SK-N-SH (cell line): ENCODE measurements at regions of chr1 and their contacts with region 1.

Region 1: GRCh38 chr1:1250786-1251284 is 4.3 kb upstream of the C1QTNF12 start:
- DNase-seq: no peak
- H3K4me3 ChIP-seq: no peak overlapping the region
- H3K27ac ChIP-seq: peak overlapping the region in 1 of 2 experiments; percentile 6; a peak in 1 of 4 replicates
- H3K4me1 ChIP-seq: no peaks in the 10 kb centered on the region; a peak in 1 of 4 replicates
- H3K27me3 ChIP-seq: no peaks in the 10 kb centered on the region
- CTCF ChIP-seq: no peak
- EP300 ChIP-seq: no peak
- RAD21 ChIP-seq: no peak

Region 2: DNA sequence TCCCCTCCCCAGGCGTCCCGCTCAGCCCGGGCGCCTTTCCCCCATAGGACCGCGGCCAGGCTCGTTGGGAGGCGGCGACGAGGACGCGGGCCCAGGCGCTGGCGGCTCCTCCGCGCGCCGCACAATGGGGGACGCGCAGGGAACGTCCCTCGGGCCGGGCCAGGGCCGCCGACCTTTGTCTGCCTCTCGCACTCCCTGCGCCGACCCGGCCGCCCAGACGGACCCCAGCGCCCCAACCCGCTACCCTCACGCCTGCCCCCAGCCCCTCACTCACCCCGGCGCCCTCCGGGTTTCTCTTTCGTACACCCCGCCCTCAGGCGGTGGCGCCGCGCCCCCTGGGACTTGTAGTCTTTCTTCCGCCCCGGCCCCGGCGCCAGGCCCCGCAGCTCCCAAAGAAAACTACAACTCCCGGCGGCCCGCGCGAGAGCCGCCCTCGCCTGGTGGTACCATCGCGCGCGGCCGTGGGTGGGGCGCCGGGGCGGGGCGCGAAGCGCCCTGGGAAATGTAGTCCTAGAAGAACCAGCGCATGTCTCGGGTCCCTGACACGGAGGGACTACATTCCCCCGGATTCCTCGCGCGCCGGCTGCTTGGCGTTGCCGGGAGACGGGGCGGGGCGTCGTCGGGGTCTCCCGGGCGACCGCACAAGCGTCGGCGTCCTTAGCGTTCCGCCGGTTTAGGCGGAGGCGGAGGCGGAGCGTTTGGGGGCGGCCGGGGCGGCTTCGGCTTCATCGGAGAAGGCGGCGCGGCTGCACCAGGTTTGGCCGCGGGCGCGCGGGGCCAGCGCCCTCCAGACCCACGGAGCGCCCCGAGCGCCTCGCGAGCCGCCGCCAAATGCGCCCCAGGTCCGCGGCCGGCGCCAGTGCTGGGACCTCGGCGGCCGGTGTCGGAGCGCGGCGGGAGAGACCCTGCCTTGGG is 134.8 kb before region 1 on chr1 and contains the start of gene C1orf159:
- CTCF ChIA-PET with region 1: interaction called, 61 read pairs
- POLR2A ChIA-PET with region 1: no interaction called
- DNase-seq: peak; percentile 99
- H3K4me3 ChIP-seq: peak within 1 kb of the TSS; percentile 59 to 60
- H3K27ac ChIP-seq: peak within 1 kb of the TSS in 1 of 2 experiments; percentile 71; a peak in 1 of 4 replicates
- H3K4me1 ChIP-seq: peaks cover 0 to 10% of the 10 kb centered on the region in 2 experiments; a peak in 1 of 4 replicates
- H3K27me3 ChIP-seq: 0 out of 2 replicates have a peak, but pooled peaks cover 6% of the 10 kb centered on the region
- CTCF ChIP-seq: no peak
- EP300 ChIP-seq: no peak
- RAD21 ChIP-seq: no peak
- polyA plus RNA-seq, gene C1orf159: 10.1 and 10.2 TPM in 2 replicates

Region 3: DNA sequence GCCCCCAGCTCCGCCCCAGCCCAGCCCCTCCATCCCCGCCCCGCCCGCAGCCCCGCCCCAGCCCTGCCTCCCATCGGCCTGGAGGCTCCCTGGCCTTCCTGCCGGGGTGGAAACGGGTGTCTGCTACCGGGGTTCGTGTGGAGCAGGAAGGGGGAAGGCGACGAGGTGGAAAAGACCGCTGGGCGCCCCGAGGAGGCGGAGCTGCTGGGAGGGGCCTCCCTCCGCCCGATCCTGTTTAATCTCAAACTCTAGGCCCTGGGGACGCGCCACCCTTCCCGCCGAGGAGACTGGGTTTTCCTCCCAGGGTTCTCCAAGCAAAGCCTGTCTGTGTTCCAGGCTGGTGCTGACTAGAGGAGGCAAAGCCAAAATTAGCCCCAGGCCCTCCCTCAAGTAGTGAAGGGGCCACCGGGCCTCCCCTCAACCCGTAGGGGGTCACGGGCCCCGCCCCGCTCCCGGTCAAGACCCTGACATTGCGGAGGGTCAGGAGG is 93.4 kb before region 1 on chr1:
- CTCF ChIA-PET with region 1: no interaction called
- POLR2A ChIA-PET with region 1: no interaction called
- DNase-seq: peak; percentile 97
- H3K4me3 ChIP-seq: peak overlapping the region in 1 of 2 experiments; percentile 41; a peak in 2 of 4 replicates
- H3K27ac ChIP-seq: peak overlapping the region in 1 of 2 experiments; percentile 43; a peak in 1 of 4 replicates
- H3K4me1 ChIP-seq: peaks cover 0 to 9% of the 10 kb centered on the region in 2 experiments; a peak in 1 of 4 replicates
- H3K27me3 ChIP-seq: no peaks in the 10 kb centered on the region
- CTCF ChIP-seq: no peak
- EP300 ChIP-seq: no peak
- RAD21 ChIP-seq: no peak

Region 4: GRCh38 chr1:1237874-1238701 is 12.7 kb before region 1 on chr1:
- CTCF ChIA-PET with region 1: interaction called, 12 read pairs
- POLR2A ChIA-PET with region 1: interaction called, 3 read pairs
- DNase-seq: no peak
- H3K4me3 ChIP-seq: no peak overlapping the region
- H3K27ac ChIP-seq: no peak overlapping the region
- H3K4me1 ChIP-seq: peaks cover 0 to 22% of the 10 kb centered on the region in 2 experiments; a peak in 1 of 4 replicates
- H3K27me3 ChIP-seq: no peaks in the 10 kb centered on the region
- CTCF ChIP-seq: no peak
- EP300 ChIP-seq: no peak
- RAD21 ChIP-seq: no peak